Activated CD4-positive, alpha-beta T cell treated with anti-CD3 and anti-CD28 coated beads for 36 hours (primary cell): ENCODE measurements at regions of chr12 and their contacts with region 1.

Region 1: GRCh38 chr12:39443081-39443928 is at the start of gene KIF21A:
- DNase-seq: peak; percentile 91
- ATAC-seq: peak; percentile 93
- H3K4me3 Mint-ChIP-seq: peak within 1 kb of the TSS; percentile 80
- H3K27ac Mint-ChIP-seq: peak within 1 kb of the TSS; percentile 78
- H3K4me1 Mint-ChIP-seq: peaks cover 19% of the 10 kb centered on the region
- H3K27me3 Mint-ChIP-seq: peaks cover 12% of the 10 kb centered on the region
- total RNA-seq, gene KIF21A: 12.0 to 13.9 TPM

Region 2: GRCh38 chr12:38316391-38317129 is 1126.7 kb before region 1 on chr12 and contains the start of gene ALG10B:
- CTCF ChIA-PET with region 1: no interaction called
- POLR2A ChIA-PET with region 1: no interaction called
- intact Hi-C with region 1: loop called in 1 of 2 experiments (anchors 5 kb)
- DNase-seq: peak; percentile 94
- ATAC-seq: peak; percentile 100
- H3K4me3 Mint-ChIP-seq: peak within 1 kb of the TSS; percentile 89
- H3K27ac Mint-ChIP-seq: peak within 1 kb of the TSS; percentile 95
- H3K4me1 Mint-ChIP-seq: peaks cover 20% of the 10 kb centered on the region
- H3K27me3 Mint-ChIP-seq: no peaks in the 10 kb centered on the region
- total RNA-seq, gene ALG10B: 14.2 to 15.3 TPM

Region 3: GRCh38 chr12:39319187-39319586 is 124.1 kb before region 1 on chr12:
- CTCF ChIA-PET with region 1: interaction called, 6 read pairs
- POLR2A ChIA-PET with region 1: no interaction called
- intact Hi-C with region 1: loop called in 1 of 2 experiments (anchors 1 kb)
- DNase-seq: no peak
- ATAC-seq: no peak
- H3K4me3 Mint-ChIP-seq: no peak overlapping the region
- H3K27ac Mint-ChIP-seq: no peak overlapping the region
- H3K4me1 Mint-ChIP-seq: no peaks in the 10 kb centered on the region
- H3K27me3 Mint-ChIP-seq: no peaks in the 10 kb centered on the region

Region 4: GRCh38 chr12:39467432-39467870 is 24.1 kb after region 1 on chr12:
- CTCF ChIA-PET with region 1: no interaction called
- POLR2A ChIA-PET with region 1: no interaction called
- intact Hi-C with region 1: loop called (anchors 1 kb)
- DNase-seq: peak; percentile 13
- ATAC-seq: peak; percentile 92
- H3K4me3 Mint-ChIP-seq: no peak overlapping the region
- H3K27ac Mint-ChIP-seq: no peak overlapping the region
- H3K4me1 Mint-ChIP-seq: peaks cover 15% of the 10 kb centered on the region
- H3K27me3 Mint-ChIP-seq: no peaks in the 10 kb centered on the region

Region 5: GRCh38 chr12:39619660-39620433 is 176.5 kb after region 1 on chr12 and contains the start of gene ABCD2:
- CTCF ChIA-PET with region 1: interaction called, 4 read pairs
- POLR2A ChIA-PET with region 1: interaction called, 8 read pairs
- intact Hi-C with region 1: loop called (anchors 1 to 2 kb)
- DNase-seq: peak; percentile 83
- ATAC-seq: peak; percentile 71
- H3K4me3 Mint-ChIP-seq: no peak within 1 kb of the TSS
- H3K27ac Mint-ChIP-seq: no peak within 1 kb of the TSS
- H3K4me1 Mint-ChIP-seq: peaks cover 58% of the 10 kb centered on the region
- H3K27me3 Mint-ChIP-seq: no peaks in the 10 kb centered on the region
- total RNA-seq, gene ABCD2: 2.1 to 2.3 TPM

Region 6: DNA sequence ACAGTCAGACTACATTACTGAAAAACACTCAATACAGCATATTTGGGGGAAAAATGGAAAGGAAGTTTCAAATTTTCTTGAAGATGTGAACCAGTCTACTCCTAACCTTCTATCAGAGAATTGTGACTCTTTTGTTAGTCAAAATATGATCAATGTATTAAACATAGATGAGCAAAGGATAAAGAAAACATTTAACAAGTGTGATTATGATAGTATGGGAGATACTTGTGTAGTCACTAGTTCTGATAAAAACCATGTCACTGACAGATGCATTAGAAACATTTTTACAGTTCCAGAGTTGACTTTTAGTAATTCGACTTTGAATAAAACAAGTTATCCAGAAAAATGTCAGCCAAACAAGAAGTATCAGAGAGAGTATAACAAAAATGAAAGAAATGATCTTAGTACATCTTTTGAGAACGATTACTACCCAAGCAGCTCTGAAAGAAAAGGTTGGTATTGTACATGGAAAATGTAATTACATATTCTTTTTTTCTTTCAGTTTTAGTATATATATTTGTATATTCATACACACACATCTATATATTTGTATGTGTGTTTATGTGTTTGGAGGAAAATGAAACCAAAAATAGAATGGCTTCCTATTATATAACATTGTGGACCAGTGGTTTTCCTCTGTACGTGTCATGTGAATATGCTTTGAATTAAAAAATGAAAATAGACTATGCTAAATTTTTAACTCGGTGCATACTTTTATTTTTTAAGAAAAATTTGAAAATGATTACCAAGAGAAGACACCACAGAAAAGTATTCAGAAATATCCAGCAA is 239.6 kb after region 1 on chr12:
- CTCF ChIA-PET with region 1: no interaction called
- POLR2A ChIA-PET with region 1: no interaction called
- intact Hi-C with region 1: loop called in 1 of 2 experiments (anchors 2 kb)
- DNase-seq: no peak
- ATAC-seq: peak; percentile 65
- H3K4me3 Mint-ChIP-seq: peak overlapping the region; percentile 39
- H3K27ac Mint-ChIP-seq: peak overlapping the region; percentile 80
- H3K4me1 Mint-ChIP-seq: peaks cover 22% of the 10 kb centered on the region
- H3K27me3 Mint-ChIP-seq: no peaks in the 10 kb centered on the region